CD4-positive, alpha-beta T cell (primary cell): ENCODE measurements at regions of chr18 and their contacts with region 1.

Region 1: GRCh38 chr18:74342416-74343043 is 26.9 kb downstream of the C18orf63 start:
- DNase-seq: peak in 7 of 14 experiments; percentile 5 to 74 (median 50)
- ATAC-seq: no peak
- H3K4me3 ChIP-seq: no peak overlapping the region
- H3K4me3 Mint-ChIP-seq: no peak overlapping the region
- H3K27ac ChIP-seq: no peak overlapping the region
- H3K27ac Mint-ChIP-seq: no peak overlapping the region
- H3K4me1 ChIP-seq: no peaks in the 10 kb centered on the region
- H3K4me1 Mint-ChIP-seq: no peaks in the 10 kb centered on the region
- H3K27me3 ChIP-seq: peaks cover 0 to 6% of the 10 kb centered on the region in 2 experiments
- H3K27me3 Mint-ChIP-seq: peaks cover 10% of the 10 kb centered on the region
- CTCF ChIP-seq: peak; percentile 74

Region 2: DNA sequence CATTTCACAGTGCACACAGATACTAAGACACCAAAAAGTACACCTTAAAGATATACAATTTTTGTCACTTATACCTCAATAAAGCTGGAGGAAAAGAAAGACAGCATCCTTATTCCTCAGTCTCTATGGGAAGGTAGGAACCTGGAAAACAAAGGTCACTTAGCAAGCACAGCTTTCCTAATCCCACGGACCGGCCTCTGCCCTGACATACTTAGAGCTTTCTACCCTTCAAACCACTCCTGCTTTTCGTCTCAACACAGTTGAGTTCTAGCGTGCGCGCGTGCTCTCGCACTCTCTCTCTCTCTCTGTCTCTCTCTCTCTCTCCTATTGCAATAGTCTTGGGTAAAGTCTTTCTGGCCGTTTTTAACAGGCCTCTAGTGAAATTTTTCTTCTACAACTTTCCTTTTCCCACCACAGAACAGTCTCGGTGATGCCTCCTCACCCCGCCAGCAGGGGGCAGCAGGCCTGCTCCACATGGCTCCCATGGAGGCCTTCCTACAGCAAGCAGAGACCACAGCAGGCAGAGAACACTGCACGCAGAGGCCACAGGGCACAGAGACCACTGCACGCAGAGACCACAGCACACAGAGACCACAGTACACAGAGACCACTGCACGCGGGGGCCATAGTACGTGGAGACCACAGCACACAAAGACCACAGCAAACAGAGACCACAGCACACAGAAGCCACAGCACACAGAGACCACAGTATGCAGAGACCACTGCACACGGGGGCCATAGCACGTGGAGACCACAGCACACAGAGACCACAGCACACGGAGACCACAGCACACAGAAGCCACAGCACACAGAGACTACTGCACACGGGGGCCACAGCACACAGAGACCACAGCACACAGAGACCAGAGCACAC is 301.8 kb before region 1 on chr18:
- CTCF ChIA-PET with region 1: interaction called, 4 read pairs
- POLR2A ChIA-PET with region 1: no interaction called
- intact Hi-C with region 1: loop called in 1 of 2 experiments (anchors 2 kb)
- DNase-seq: peak; percentile 40 to 76 (median 50)
- ATAC-seq: peak; percentile 69
- H3K4me3 ChIP-seq: no peak overlapping the region
- H3K4me3 Mint-ChIP-seq: no peak overlapping the region
- H3K27ac ChIP-seq: no peak overlapping the region
- H3K27ac Mint-ChIP-seq: no peak overlapping the region
- H3K4me1 ChIP-seq: no peaks in the 10 kb centered on the region
- H3K4me1 Mint-ChIP-seq: no peaks in the 10 kb centered on the region
- H3K27me3 ChIP-seq: peaks cover 0 to 3% of the 10 kb centered on the region in 2 experiments
- H3K27me3 Mint-ChIP-seq: no peaks in the 10 kb centered on the region
- CTCF ChIP-seq: peak; percentile 52

Region 3: GRCh38 chr18:74081966-74082741 is 260.4 kb before region 1 on chr18:
- CTCF ChIA-PET with region 1: interaction called, 12 read pairs
- POLR2A ChIA-PET with region 1: no interaction called
- intact Hi-C with region 1: loop called in 1 of 2 experiments (anchors 2 kb)
- DNase-seq: peak; percentile 43 to 84 (median 62)
- ATAC-seq: peak; percentile 97
- H3K4me3 ChIP-seq: peak overlapping the region; percentile 38
- H3K4me3 Mint-ChIP-seq: peak overlapping the region; percentile 78
- H3K27ac ChIP-seq: peak overlapping the region; percentile 61 to 74
- H3K27ac Mint-ChIP-seq: peak overlapping the region; percentile 85
- H3K4me1 ChIP-seq: peaks cover 16% of the 10 kb centered on the region
- H3K4me1 Mint-ChIP-seq: peaks cover 22% of the 10 kb centered on the region
- H3K27me3 ChIP-seq: no peaks in the 10 kb centered on the region
- H3K27me3 Mint-ChIP-seq: no peaks in the 10 kb centered on the region
- CTCF ChIP-seq: peak; percentile 60

Region 4: DNA sequence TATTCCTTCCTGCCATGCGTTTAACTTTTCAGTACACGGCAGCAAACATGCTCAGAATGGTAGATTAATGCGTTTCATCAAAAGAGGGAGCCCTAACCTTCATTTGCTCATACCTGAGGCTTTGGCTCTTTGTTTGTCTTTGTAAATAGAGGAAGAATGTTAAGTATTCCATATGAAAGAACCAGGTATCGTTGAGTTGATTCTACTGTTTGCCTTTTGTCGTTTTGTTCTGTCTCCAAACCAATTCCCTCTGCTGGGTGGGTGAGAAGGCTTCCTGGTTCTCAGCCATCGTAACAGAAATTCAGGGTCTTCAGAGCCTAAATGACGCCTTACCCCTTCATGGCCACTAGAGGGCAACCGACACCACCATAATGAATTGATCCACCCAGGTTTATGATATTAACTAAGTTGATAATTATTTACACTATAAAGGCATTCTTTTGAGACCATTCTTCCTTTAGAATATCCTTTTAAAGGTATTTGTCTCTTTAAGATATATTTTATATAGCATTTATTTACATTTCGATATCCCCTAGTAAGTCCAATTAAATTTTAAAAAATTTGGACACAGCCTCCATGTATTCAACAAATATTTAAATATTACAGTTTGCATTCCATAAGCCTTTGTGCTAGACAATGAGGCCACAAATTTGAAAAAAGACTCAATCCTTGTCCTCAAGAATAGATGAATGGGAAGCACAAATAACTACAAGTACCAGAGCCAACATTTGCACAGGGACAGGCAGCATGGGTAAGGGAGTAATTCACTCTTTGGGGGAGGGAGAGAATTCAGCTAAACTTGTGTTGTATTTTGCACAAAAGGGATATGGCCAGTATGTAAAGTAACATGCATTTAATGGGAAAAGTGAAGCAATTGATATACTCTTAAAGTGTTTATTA is 146.1 kb before region 1 on chr18:
- CTCF ChIA-PET with region 1: interaction called, 7 read pairs
- POLR2A ChIA-PET with region 1: no interaction called
- intact Hi-C with region 1: loop called (anchors 1 kb)
- DNase-seq: peak in 13 of 14 experiments; percentile 18 to 86 (median 36)
- ATAC-seq: peak; percentile 96
- H3K4me3 ChIP-seq: peak overlapping the region; percentile 50
- H3K4me3 Mint-ChIP-seq: peak overlapping the region; percentile 83
- H3K27ac ChIP-seq: peak overlapping the region in 1 of 2 donors; percentile 27
- H3K27ac Mint-ChIP-seq: peak overlapping the region; percentile 57
- H3K4me1 ChIP-seq: no peaks in the 10 kb centered on the region
- H3K4me1 Mint-ChIP-seq: no peaks in the 10 kb centered on the region
- H3K27me3 ChIP-seq: peaks cover 0 to 2% of the 10 kb centered on the region in 2 experiments
- H3K27me3 Mint-ChIP-seq: peaks cover 13% of the 10 kb centered on the region
- CTCF ChIP-seq: peak; percentile 99

Region 5: GRCh38 chr18:74234326-74235171 is 108.0 kb before region 1 on chr18:
- CTCF ChIA-PET with region 1: no interaction called
- POLR2A ChIA-PET with region 1: no interaction called
- intact Hi-C with region 1: no loop called
- DNase-seq: peak in 2 of 14 experiments; percentile 21 to 38
- ATAC-seq: no peak
- H3K4me3 ChIP-seq: no peak overlapping the region
- H3K4me3 Mint-ChIP-seq: no peak overlapping the region
- H3K27ac ChIP-seq: no peak overlapping the region
- H3K27ac Mint-ChIP-seq: no peak overlapping the region
- H3K4me1 ChIP-seq: no peaks in the 10 kb centered on the region
- H3K4me1 Mint-ChIP-seq: no peaks in the 10 kb centered on the region
- H3K27me3 ChIP-seq: no peaks in the 10 kb centered on the region
- H3K27me3 Mint-ChIP-seq: peaks cover 8% of the 10 kb centered on the region
- CTCF ChIP-seq: no peak